ENCODE measurements at regions of chr15 and their contacts with region 1.

Region 1: GRCh38 chr15:81323944-81324881 is at the start of gene STARD5:
- DNase-seq: peak; percentile 97 to 98
- H3K4me3 ChIP-seq: peak within 1 kb of the TSS; percentile 62
- H3K4me3 Mint-ChIP-seq: peak within 1 kb of the TSS; percentile 90
- H3K27ac Mint-ChIP-seq: peak within 1 kb of the TSS; percentile 48
- H3K4me1 ChIP-seq: peaks cover 15% of the 10 kb centered on the region
- H3K4me1 Mint-ChIP-seq: peaks cover 6% of the 10 kb centered on the region
- H3K27me3 ChIP-seq: no peaks in the 10 kb centered on the region
- H3K27me3 Mint-ChIP-seq: no peaks in the 10 kb centered on the region
- CTCF ChIP-seq: no peak
- total RNA-seq, gene STARD5: 1.0 and 1.3 TPM in 2 replicates

Region 2: GRCh38 chr15:81357223-81357622 is 33.0 kb after region 1 on chr15:
- CTCF ChIA-PET with region 1: no interaction called
- POLR2A ChIA-PET with region 1: no interaction called
- intact Hi-C with region 1: loop called (anchors 5 kb)
- DNase-seq: no peak
- H3K4me3 ChIP-seq: no peak overlapping the region
- H3K4me3 Mint-ChIP-seq: no peak overlapping the region
- H3K27ac Mint-ChIP-seq: no peak overlapping the region
- H3K4me1 ChIP-seq: no peaks in the 10 kb centered on the region
- H3K4me1 Mint-ChIP-seq: no peaks in the 10 kb centered on the region
- H3K27me3 ChIP-seq: no peaks in the 10 kb centered on the region
- H3K27me3 Mint-ChIP-seq: peaks cover 6% of the 10 kb centered on the region
- CTCF ChIP-seq: no peak

Region 3: GRCh38 chr15:81473177-81473576 is 149.0 kb after region 1 on chr15:
- CTCF ChIA-PET with region 1: no interaction called
- POLR2A ChIA-PET with region 1: no interaction called
- intact Hi-C with region 1: no loop called
- DNase-seq: no peak
- H3K4me3 ChIP-seq: no peak overlapping the region
- H3K4me3 Mint-ChIP-seq: no peak overlapping the region
- H3K27ac Mint-ChIP-seq: no peak overlapping the region
- H3K4me1 ChIP-seq: no peaks in the 10 kb centered on the region
- H3K4me1 Mint-ChIP-seq: no peaks in the 10 kb centered on the region
- H3K27me3 ChIP-seq: no peaks in the 10 kb centered on the region
- H3K27me3 Mint-ChIP-seq: peaks cover 7% of the 10 kb centered on the region
- CTCF ChIP-seq: no peak

Measured in Caco-2 (cell line).